A673 (cell line): ENCODE measurements at regions of chr22 and their contacts with region 1.

Region 1: DNA sequence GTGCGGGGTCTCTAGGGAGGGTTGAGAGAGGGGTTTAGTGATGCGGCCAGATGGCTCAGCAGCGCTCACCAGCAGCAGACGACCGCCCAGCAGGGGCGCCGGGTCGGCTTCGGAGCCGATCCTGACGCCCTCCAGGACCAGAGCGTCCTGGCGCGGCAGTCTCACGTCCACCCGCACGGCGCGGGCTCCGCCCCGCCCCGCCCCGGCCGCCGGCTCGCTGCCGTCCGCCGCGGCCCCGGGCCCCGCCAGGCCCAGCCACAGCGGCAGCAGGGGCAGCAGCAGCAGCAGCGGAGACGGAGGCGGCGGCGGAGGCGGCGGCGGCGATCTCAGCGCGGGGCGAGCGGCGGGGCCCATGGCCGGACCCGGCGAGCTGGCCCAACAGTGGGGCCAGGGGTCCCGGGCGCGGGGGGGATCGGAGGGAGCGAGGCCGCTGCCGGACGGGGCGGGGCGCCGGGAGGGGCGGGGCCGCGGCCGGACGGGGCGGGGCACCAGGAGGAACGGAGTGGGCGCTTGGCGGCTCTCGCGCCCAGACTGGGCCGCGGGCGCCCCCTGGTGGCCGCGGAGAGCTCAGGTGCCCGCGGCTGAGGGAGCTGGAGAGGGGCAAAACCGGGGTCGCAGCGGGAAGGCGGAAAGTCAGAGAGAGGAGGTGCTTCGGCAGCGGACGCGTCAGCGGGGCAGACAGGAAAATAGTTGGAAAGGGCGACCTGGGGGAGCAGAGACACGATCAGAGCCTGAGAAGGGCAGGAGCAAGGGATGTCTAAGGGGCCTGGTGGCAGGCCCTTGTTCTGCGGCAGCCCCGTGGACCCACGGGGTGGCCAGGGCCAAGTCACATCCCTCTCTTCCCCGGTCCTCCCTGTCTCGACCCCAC is at the start of gene RNF215:
- DNase-seq: peak; percentile 89
- H3K4me3 ChIP-seq: peak within 1 kb of the TSS; percentile 58
- H3K27ac ChIP-seq: peak within 1 kb of the TSS; percentile 54
- H3K4me1 ChIP-seq: peaks cover 4% of the 10 kb centered on the region
- H3K27me3 ChIP-seq: no peaks in the 10 kb centered on the region
- CTCF ChIP-seq: peak; percentile 88
- total RNA-seq, gene RNF215: 18.9 and 22.4 TPM in 2 replicates

Region 2: DNA sequence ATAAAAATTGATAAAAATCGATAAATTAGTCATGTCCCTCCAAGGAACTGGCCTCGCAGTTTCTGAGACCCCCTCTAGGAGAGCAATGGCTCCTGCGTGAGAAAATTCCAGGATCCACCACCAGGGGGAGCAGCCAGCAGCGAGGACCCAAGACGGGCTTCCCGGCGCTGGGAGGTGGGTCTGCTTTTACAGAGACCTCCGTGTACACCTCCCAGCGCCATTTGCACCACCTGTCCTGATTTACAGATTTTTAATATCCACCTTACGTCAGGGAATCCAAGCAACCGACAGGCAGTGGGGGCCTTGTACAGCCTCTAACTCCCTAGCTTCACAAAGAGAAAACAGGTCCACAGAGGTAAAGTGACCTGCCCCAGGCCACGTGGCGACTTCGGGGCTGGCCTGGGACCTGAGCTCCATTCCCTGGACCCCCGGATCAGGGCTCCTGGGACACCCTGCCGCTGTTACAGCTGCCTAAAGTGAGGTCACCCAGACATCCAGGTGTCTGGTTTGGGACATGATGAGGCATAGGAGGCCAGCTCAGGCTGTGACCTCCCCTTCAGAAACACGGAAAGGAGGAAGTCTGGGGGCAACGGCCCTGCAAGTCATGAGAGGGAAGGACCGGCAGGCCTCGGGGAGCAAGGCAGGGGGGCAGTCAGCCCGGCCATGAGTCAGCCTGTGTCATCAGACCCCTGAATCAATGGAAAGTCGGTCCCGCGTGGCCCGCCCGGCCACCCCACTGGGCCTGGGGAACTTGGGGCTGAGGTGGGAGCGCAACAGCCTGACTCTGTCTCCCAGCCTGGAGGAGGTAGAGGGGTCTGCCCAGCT is 124.1 kb before region 1 on chr22:
- CTCF ChIA-PET with region 1: interaction called, 3 read pairs
- POLR2A ChIA-PET with region 1: no interaction called
- intact Hi-C with region 1: loop called (anchors 2 kb)
- DNase-seq: peak; percentile 79
- H3K4me3 ChIP-seq: no peak overlapping the region
- H3K27ac ChIP-seq: no peak overlapping the region
- H3K4me1 ChIP-seq: no peaks in the 10 kb centered on the region
- H3K27me3 ChIP-seq: no peaks in the 10 kb centered on the region
- CTCF ChIP-seq: peak; percentile 94

Region 3: DNA sequence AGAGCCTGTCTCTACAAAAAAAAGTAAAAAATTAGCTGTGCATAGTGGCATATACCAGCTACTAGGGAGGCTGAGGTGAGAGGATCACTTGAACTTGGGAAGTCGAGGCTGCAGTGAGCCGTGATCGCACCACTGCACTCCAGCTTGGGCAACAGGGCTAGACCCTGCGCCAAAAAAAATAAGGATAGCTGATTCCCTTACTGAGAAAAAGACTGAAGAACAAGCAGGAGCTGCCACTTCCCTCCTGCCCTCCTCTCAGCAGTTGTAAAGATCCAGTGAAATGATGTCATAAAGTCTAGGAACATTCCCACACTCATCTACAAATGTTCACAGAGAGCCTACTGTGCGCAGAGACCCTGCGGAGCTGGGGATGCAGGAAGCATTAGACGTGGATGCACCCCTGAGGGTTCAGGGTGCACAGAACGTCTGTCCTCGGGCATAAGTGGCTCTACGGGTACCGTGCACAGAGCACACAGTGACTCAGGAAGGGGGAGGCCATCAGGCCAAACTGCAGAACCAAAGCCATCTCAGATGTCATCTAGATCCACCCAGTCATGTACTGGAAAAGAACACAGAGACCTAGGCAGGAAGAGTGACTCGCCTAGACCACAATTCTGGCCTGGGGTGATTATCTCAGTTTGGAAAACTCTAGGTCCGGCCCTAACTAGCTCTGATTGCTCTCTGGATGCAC is 21.4 kb after region 1 on chr22:
- CTCF ChIA-PET with region 1: interaction called, 11 read pairs
- POLR2A ChIA-PET with region 1: no interaction called
- intact Hi-C with region 1: no loop called
- DNase-seq: no peak
- H3K4me3 ChIP-seq: no peak overlapping the region
- H3K27ac ChIP-seq: peak overlapping the region; percentile 10
- H3K4me1 ChIP-seq: peaks cover 13% of the 10 kb centered on the region
- H3K27me3 ChIP-seq: no peaks in the 10 kb centered on the region
- CTCF ChIP-seq: no peak

Region 4: DNA sequence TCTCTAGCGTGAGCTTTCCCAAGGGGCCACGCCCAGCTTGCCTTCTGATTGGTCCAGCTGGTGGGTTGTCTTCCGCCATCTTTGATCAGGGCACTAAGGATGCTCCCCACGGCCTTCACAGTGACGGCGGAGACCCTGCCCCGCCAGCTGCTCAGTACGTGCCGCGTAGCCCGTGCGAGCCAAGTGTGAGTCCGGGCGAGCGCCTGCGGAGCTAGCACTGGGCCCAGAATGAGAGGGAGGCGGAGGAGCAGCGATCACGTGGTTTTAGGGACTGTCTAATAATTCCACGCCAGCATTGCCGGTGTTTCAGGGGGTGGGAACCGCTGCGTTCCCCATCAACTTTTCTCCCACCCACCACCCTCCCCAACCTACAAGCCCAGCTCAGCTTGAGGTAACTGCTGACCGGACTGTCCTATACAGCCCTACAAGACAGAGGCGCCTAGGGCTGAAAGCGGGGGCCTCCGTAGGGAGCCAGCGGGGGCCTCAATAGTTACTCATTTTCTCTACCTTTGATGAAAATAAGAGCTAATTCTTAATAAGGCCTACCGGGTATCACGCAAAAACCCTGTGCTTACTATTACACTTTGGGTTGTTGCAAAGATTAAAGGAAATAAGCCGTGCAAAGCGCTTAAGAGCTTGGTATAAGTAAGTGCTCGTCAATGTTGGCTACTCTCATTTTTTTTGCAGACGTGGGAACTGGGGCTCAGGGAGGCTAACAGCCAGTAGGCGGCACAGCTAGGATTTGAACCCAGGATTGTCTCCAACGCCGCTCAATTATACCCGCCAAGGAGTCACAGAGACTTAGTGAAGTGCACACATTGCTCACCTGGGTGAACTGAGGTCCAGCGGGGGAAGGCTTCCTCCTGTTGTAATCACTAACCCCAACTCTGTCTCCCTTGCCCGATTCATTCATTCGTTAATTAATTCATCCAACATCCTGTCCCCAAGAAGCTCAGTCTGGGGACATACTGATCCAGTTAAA is 37.1 kb after region 1 on chr22:
- CTCF ChIA-PET with region 1: interaction called, 10 read pairs
- POLR2A ChIA-PET with region 1: no interaction called
- intact Hi-C with region 1: no loop called
- DNase-seq: peak; percentile 100
- H3K4me3 ChIP-seq: peak overlapping the region; percentile 60
- H3K27ac ChIP-seq: peak overlapping the region; percentile 97
- H3K4me1 ChIP-seq: peaks cover 50% of the 10 kb centered on the region
- H3K27me3 ChIP-seq: no peaks in the 10 kb centered on the region
- CTCF ChIP-seq: no peak